Posterior cingulate gyrus (tissue), 11 donors: ENCODE measurements at regions of chr2 and their contacts with region 1.

Region 1: GRCh38 chr2:39379643-39380524 is 57.2 kb downstream of the MAP4K3 start:
- DNase-seq: no peak

Region 2: DNA sequence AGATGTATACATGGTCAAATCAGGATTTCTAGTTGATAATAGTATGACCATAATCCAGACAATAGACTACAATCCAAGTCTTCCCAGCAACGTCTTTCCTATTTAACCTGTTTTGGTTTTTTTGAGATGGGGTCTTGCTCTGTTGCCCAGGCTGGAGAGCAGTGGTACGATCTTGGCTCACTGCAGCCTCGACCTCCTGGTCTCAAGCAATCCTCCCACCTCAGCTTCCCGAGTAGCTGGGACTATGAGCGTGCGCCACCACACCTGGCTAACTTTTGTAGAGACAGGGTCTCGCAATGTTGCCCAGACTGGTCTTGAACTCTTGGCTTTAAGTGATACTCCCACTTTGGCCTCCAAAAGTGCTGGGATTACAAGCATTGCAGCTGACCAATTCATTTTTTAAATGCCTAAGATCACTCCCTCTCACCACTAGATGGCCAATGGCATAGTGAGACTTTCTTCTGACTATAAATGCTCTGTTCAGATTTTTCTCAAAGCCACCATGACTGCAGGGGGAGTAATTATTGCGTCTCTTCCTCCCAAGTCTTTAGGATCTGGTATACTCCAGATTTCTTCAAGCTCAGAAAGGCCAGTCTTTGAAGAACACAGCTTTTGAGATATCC is 824.8 kb before region 1 on chr2:
- intact Hi-C with region 1: no loop called
- DNase-seq: peak in 1 of 10 donors; percentile 49

Region 3: DNA sequence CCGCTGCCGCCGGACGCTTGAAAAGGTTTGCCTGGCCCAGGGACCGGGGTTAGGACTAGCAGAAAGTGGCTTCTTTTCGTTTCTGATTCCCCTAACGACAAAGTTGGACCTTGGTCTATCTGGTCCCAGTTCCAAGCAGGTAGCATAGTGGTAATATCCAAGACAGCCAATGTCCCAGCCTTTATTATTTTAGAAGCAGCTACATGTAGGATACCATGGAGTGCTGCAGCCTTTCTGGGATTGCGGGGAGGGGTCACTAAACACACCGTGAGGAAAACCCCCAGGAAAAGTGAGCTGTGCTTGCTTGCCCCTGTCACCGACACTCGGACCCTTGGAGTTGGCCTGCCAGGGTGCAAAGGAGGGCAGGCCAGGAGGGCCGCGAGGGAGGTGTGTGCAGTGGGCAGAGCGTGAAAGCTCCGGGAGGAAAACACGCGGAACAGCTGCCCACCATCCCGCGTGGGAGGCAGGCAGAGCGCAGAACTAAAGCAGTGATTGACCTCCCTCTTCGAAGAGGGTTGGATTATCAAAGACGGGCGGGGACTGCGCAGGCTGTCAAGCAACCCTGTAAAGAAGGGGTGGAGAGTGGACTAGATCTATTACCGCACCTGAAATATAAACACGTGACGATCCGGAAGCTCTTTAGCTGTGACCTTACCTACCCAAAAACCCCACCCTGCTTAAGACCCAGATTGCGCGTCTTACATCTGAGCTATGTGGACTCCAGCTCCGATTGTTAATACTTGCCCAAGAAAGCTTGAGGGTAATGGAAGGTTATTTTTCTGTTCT is 57.8 kb after region 1 on chr2:
- intact Hi-C with region 1: loop called (anchors 2 kb)
- DNase-seq: peak in 9 of 10 donors; percentile 17 to 88 (median 31)

Region 4: GRCh38 chr2:39476524-39476923 is 96.6 kb after region 1 on chr2:
- intact Hi-C with region 1: no loop called
- DNase-seq: no peak